ENCODE measurements at regions of chr1 and their contacts with region 1.

Region 1: DNA sequence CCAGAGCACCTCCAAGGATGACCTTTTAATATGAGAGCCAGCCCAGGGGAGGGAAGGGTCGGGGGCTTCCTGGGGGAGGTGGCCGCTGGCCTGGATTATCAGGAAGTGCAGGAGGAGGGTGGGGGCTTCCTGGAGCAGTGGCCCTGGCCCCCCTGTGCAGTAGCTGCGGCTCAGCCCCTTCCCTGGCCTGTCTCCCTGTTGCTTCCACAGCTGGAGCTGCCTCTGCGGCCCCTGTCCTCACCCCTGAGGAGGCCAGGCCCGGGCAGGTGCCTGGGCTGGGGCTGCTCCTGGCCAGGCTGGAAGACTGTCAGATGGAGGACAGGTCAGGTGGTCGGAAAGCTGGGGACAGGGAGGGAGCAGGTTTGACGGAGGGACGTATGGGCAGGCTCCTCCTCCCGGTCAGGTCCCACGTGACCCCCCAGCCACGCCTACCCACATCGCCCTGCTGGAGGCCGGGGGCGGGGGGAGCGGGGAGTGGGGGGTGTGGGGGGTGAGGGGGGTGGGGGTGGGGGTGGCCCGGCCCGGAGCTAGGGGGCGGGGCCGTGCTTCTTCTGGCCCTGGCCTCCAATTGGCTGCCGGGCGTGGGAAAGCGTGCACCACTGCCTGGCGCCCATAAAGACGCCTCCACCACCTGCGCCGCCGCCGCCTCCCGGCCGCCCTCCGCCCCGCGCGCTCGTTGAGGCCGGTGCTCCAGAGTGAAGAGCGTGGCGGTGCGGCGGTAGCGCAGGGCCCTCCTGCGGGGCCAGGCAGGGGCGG is 10.2 kb upstream of the TNFRSF14 start:
- DNase-seq: peak; percentile 91
- ATAC-seq: peak; percentile 37
- H3K4me3 Mint-ChIP-seq: peak overlapping the region; percentile 91
- H3K27ac Mint-ChIP-seq: peak overlapping the region; percentile 96
- H3K4me1 Mint-ChIP-seq: peaks cover 9% of the 10 kb centered on the region
- H3K27me3 Mint-ChIP-seq: peaks cover 5% of the 10 kb centered on the region

Region 2: DNA sequence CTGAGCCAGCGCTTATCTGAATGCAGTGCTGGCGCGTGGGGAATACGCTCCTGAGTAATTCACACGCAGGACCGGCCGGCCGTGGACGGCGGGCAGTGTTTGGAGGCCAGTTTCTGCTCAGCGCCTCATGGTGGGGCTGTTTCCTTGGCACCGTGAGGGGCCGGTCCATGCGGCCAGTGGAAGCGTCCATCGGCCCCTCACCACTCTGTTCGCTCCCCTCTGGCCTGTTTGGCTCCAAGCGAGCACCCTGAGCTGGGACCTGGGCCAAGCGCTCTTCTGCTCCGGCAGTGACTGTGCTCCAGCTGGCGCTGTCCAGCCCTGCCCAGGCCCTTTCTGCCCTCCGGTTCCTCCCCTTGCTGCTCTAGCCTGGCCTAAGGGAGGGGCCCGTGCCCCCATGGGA is 86.2 kb before region 1 on chr1:
- POLR2A ChIA-PET with region 1: no interaction called
- DNase-seq: no peak
- ATAC-seq: peak; percentile 14
- H3K4me3 Mint-ChIP-seq: no peak overlapping the region
- H3K27ac Mint-ChIP-seq: no peak overlapping the region
- H3K4me1 Mint-ChIP-seq: no peaks in the 10 kb centered on the region
- H3K27me3 Mint-ChIP-seq: no peaks in the 10 kb centered on the region

Region 3: DNA sequence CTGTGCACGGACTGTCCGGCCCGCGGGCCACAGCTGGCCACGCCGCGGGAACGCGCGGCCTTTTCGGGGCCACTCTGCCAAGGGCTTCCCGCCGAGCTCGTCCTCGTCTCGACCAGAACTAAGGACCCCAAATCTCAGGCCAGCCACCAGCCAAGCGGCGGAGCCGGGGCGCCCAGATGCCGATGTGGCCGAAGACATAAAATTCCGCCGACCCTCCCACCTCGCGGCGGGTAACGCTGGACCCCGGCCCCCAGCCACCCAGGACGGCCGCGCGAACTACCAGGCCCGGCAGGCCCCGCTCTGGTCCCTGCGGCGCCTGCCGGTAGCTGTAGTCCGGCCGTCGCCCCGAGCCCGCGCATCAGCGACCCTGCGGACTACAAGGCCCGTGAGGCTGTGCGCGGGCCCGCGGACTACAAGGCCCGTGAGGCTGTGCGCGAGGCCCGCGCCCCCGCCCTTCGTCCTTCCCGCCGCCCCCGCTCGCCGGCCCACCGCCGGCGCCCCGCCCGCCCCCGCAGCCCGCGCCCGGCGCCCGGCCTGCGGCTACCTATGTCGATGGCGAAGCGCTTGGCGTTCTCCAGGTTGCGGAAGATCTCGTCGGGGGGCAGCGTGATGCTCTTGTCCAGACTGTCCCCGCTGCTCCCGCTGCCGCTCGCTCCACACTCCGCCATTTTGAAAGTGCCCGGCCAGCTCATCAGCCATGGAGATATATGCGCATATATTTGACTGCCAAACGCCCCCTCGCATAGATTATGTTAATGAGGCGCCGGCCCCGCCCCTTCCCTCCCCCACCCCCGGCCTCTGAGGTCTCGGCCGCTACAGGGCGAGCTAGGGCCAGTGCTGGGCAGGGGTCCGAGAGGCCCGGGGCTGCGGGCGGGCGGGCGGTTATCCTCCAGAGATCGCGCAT is 19.8 kb before region 1 on chr1 and contains the start of gene PANK4:
- POLR2A ChIA-PET with region 1: interaction called, 128 read pairs
- DNase-seq: peak; percentile 92
- ATAC-seq: peak; percentile 85
- H3K4me3 Mint-ChIP-seq: peak within 1 kb of the TSS; percentile 86
- H3K27ac Mint-ChIP-seq: peak within 1 kb of the TSS; percentile 96
- H3K4me1 Mint-ChIP-seq: peaks cover 35% of the 10 kb centered on the region
- H3K27me3 Mint-ChIP-seq: peaks cover 16% of the 10 kb centered on the region
- total RNA-seq, gene PANK4: 86.5 to 88.9 TPM

Measured in activated naive CD8-positive, alpha-beta T cell treated with anti-CD3 and anti-CD28 coated beads, Interleukin-2, amount 10 ng/mL, durations not matched to agents 7 days and 5 days (primary cell).